Mammary epithelial cell (primary cell): ENCODE measurements at regions of chr19 and their contacts with region 1.

Region 1: DNA sequence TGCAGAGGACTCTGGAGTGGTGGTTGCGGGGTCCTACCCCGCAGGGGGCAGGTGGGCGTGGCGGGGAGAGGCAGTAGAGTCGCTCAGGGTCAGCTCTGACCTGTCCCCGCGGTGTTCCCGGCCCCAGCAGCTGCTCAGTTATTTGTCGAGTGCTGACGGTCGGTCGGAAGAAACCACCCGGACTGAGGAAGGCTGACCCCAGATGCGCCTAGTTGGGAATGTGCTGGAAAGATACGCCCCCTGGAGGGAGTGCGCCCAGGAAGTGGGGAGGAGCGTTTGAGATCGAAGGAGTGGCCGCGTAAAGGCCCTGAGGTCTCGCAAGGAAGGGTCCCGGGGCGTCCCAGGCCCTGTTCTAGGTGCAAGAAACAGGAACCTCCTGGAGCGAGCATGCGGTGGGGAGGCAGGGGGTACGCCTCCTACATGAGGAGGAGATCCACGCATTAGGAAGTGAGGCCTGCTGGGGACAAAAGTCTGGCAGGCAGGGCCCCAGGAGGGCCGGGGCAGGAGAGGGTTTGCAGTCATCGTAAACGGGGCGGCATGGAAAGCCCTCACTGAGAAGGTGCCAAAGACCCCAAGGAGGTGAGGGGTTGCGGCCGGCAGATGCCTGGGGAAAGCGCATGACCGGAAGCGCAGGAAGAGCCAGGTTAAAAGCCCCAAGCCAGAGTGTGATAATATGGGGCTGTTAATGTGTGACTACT is 9.2 kb downstream of the CCDC8 start:
- DNase-seq: no peak
- H3K4me3 ChIP-seq: peak overlapping the region; percentile 18 to 49 (median 19)
- H3K27ac ChIP-seq: peak overlapping the region; percentile 14
- H3K4me1 ChIP-seq: peaks cover 29% of the 10 kb centered on the region
- H3K27me3 ChIP-seq: no peaks in the 10 kb centered on the region
- CTCF ChIP-seq: peak in 1 of 2 donors; percentile 17

Region 2: DNA sequence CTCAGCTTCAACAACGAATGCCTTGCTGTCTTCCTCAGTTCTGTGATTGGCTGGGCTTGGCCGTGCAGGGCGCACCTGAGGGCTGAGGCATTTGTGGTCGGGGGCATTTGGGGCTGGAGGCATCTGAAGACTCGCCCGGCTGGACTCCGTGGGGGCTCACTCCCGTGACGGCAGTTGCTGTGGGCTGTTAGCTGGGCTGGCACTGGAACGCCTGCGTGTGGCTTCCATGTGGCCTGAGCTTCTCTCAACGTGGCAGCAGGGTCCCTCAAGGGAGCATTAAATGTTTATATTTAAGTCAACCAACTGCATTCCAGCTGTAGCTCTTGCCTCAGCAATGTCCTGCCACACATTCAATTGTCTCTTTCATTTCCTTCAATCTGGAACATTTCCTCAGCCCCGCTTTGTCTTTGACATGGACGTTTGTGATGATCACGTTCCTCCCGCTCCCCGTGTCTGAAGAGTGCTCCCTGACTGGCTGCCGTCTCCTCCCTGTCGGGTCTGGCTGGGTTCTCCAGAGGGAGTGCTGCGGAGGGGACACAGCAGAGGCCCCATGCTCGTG is 11.9 kb before region 1 on chr19:
- CTCF ChIA-PET with region 1: interaction called, 13 read pairs
- dilution Hi-C with region 1: no loop called
- in situ Hi-C with region 1: no loop called
- intact Hi-C with region 1: no loop called
- DNase-seq: no peak
- H3K4me3 ChIP-seq: no peak overlapping the region
- H3K27ac ChIP-seq: no peak overlapping the region
- H3K4me1 ChIP-seq: no peaks in the 10 kb centered on the region
- H3K27me3 ChIP-seq: no peaks in the 10 kb centered on the region
- CTCF ChIP-seq: no peak

Region 3: GRCh38 chr19:46447824-46448223 is 43.6 kb after region 1 on chr19:
- CTCF ChIA-PET with region 1: no interaction called
- dilution Hi-C with region 1: loop called (anchors 5 kb)
- in situ Hi-C with region 1: no loop called
- intact Hi-C with region 1: no loop called
- DNase-seq: no peak
- H3K4me3 ChIP-seq: no peak overlapping the region
- H3K27ac ChIP-seq: no peak overlapping the region
- H3K4me1 ChIP-seq: peaks cover 26% of the 10 kb centered on the region
- H3K27me3 ChIP-seq: no peaks in the 10 kb centered on the region
- CTCF ChIP-seq: no peak